GM12878 (cell line): ENCODE measurements at regions of chr1 and their contacts with region 1.

Region 1: GRCh38 chr1:201221201-201221846 is 30.7 kb downstream of the IGFN1 start:
- DNase-seq: no peak
- ATAC-seq: no peak
- H3K4me3 ChIP-seq: no peak overlapping the region
- H3K27ac ChIP-seq: no peak overlapping the region
- H3K4me1 ChIP-seq: no peaks in the 10 kb centered on the region
- H3K27me3 ChIP-seq: peaks cover 0 to 3% of the 10 kb centered on the region in 2 experiments; a peak in 3 of 4 replicates
- CTCF ChIP-seq: no peak
- EP300 ChIP-seq: no peak
- POLR2A ChIP-seq: no peak
- RAD21 ChIP-seq: no peak

Region 2: DNA sequence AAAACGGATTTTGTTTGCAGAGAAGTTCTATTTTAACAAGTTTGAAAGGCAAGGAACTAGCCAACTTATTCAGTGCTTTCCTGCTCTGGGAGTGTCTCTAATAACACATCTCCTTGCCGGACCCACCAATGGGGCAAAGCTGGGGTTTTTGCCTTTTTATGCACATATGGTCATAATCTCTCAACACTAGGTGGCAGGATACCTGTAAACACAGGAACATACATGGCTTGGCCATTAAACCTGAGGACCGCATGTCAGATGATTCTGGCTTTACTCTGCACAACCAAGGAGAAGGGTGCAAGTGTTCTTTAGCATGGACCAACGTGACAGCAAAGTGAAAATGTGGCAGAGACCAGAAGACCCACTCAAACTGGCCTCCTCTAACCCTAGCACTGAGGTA is 71.9 kb before region 1 on chr1:
- CTCF ChIA-PET with region 1: interaction called, 19 read pairs
- POLR2A ChIA-PET with region 1: no interaction called
- RAD21 ChIA-PET with region 1: interaction called, 5 read pairs
- SMC1A ChIA-PET with region 1: interaction called, 3 read pairs
- in situ Hi-C with region 1: no loop called
- intact Hi-C with region 1: loop called (anchors 1 kb)
- DNase-seq: no peak
- ATAC-seq: peak; percentile 59
- H3K4me3 ChIP-seq: no peak overlapping the region
- H3K27ac ChIP-seq: no peak overlapping the region
- H3K4me1 ChIP-seq: peaks cover 8% of the 10 kb centered on the region; the same call in 1 of the 2 replicates
- H3K27me3 ChIP-seq: no peaks in the 10 kb centered on the region
- CTCF ChIP-seq: peak; percentile 41 to 52 (median 44); a peak in 4 of 6 replicates
- EP300 ChIP-seq: no peak
- POLR2A ChIP-seq: no peak
- RAD21 ChIP-seq: peak; percentile 51

Region 3: DNA sequence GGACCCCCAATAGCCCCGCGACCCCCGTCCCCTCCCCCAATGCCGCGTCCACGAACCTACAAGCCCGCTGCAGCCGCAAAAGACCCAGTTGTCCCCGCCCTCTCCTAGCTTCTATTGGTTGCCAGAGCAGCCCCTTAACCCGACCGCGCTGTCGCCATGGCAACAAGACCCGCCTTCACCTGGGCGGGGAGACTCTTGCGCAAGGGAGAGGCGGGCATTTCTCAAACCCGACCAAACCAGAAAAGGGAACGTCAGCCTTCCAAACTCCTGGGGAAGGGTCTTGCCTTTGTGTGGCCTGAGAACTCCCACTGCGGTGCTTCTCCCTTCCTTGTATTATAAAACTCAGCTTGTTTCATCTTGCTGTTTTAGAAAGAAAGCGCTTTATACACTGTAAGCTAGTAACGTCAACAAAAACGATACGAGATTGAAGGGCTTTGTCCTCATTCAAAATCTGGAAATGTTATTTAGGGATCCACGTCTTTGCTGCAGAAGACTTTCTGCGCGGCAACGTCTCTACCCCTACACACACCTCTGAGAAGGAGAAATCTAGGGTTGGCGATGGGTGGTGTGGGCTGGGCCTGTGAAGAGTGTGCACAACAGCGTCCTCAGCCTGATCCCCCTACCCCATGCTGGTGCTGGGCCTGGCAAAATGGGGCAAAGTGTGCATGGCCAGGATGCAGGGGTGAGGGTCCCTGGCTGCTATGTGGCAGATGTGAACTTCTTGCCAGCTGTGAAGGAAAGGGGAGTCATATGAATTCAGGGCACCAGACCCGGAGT is 66.7 kb before region 1 on chr1 and contains the start of gene TMEM9:
- CTCF ChIA-PET with region 1: interaction called, 19 read pairs
- POLR2A ChIA-PET with region 1: no interaction called
- RAD21 ChIA-PET with region 1: interaction called, 5 read pairs
- SMC1A ChIA-PET with region 1: interaction called, 3 read pairs
- in situ Hi-C with region 1: no loop called
- intact Hi-C with region 1: loop called (anchors 1 kb)
- DNase-seq: peak; percentile 83
- ATAC-seq: peak; percentile 98
- H3K4me3 ChIP-seq: peak within 1 kb of the TSS; percentile 69
- H3K27ac ChIP-seq: peak within 1 kb of the TSS; percentile 57
- H3K4me1 ChIP-seq: peaks cover 12% of the 10 kb centered on the region
- H3K27me3 ChIP-seq: no peaks in the 10 kb centered on the region; a peak in 1 of 4 replicates
- CTCF ChIP-seq: no peak
- EP300 ChIP-seq: no peak
- POLR2A ChIP-seq: no peak
- RAD21 ChIP-seq: no peak
- polyA plus RNA-seq, gene TMEM9: 8.1 to 11.3 TPM